OCI-LY7 (cell line): ENCODE measurements at regions of chr9 and their contacts with region 1.

Region 1: DNA sequence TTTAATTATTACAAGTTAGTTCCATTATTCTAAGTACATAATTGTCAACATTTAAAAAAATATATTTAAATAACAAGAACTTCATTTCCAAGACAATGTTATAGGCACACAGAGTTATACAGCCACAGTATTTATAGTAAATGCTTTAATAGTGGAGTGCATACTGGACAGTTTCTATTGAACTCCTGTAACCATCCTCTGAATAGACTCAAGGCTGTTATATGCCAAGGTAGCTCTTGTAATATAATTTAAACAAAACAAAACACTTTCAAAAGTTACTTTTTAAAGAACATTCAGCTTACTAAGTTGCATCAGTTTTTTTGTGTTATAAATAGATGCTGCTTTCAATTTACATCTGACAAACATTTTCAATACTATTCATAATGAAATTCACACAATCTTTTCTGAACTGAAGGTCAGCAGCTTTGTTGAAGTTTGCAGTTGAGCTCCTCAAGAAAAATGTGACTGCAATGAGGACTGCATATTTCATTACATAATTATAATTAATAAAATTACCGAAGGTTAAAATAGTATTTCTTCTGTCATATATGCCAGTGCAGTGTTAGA is 549.9 kb upstream of the CYLC2 start:
- DNase-seq: no peak
- H3K4me3 ChIP-seq: no peak overlapping the region
- H3K27ac ChIP-seq: no peak overlapping the region
- H3K4me1 ChIP-seq: no peaks in the 10 kb centered on the region
- CTCF ChIP-seq: no peak

Region 2: DNA sequence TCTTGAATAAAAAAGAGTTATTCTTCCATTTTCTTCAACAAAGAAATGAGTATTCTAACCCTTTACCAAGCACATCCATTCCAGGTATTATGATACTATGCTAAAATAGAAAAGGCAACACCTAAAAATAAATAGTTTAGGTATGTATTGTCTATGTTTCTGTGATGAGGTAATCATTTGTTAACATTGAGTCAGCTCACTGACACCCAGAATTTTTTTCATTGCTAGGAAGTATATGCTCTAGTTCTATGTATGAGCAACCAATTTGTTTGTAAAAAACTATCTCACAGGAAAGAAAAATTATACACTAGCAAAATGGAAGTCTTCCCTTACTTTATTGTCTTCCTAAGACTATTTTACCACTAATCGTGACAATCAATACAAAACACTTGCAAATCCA is 91.2 kb before region 1 on chr9:
- CTCF ChIA-PET with region 1: no interaction called
- POLR2A ChIA-PET with region 1: no interaction called
- intact Hi-C with region 1: no loop called
- DNase-seq: no peak
- H3K4me3 ChIP-seq: no peak overlapping the region
- H3K27ac ChIP-seq: no peak overlapping the region
- H3K4me1 ChIP-seq: no peaks in the 10 kb centered on the region
- CTCF ChIP-seq: no peak

Region 3: DNA sequence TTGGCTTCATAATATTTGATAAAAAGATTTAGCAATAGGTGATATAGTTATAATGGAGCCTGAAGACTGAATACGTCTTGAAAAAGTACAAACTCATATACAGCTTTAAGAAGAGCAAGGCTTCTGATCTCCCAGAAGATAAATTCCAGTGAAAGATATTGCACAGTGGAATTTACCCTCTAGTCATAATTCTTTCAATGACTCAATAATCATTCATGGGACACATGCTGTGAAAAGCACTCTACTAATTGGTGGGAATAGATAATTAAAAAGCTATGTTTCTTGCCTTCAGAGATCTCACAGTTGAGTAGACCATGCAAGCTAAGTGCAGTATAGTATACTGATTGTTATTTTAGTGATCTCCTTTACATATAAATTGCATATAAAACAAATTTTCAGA is 11.3 kb after region 1 on chr9:
- CTCF ChIA-PET with region 1: no interaction called
- POLR2A ChIA-PET with region 1: interaction called, 10 read pairs
- intact Hi-C with region 1: no loop called
- DNase-seq: no peak
- H3K4me3 ChIP-seq: no peak overlapping the region
- H3K27ac ChIP-seq: no peak overlapping the region
- H3K4me1 ChIP-seq: no peaks in the 10 kb centered on the region
- CTCF ChIP-seq: no peak